ENCODE measurements at regions of chr14 and their contacts with region 1.

Region 1: GRCh38 chr14:92686900-92687444 is 61.5 kb downstream of the LGMN start:
- DNase-seq: peak; percentile 48 to 94 (median 82)

Region 2: DNA sequence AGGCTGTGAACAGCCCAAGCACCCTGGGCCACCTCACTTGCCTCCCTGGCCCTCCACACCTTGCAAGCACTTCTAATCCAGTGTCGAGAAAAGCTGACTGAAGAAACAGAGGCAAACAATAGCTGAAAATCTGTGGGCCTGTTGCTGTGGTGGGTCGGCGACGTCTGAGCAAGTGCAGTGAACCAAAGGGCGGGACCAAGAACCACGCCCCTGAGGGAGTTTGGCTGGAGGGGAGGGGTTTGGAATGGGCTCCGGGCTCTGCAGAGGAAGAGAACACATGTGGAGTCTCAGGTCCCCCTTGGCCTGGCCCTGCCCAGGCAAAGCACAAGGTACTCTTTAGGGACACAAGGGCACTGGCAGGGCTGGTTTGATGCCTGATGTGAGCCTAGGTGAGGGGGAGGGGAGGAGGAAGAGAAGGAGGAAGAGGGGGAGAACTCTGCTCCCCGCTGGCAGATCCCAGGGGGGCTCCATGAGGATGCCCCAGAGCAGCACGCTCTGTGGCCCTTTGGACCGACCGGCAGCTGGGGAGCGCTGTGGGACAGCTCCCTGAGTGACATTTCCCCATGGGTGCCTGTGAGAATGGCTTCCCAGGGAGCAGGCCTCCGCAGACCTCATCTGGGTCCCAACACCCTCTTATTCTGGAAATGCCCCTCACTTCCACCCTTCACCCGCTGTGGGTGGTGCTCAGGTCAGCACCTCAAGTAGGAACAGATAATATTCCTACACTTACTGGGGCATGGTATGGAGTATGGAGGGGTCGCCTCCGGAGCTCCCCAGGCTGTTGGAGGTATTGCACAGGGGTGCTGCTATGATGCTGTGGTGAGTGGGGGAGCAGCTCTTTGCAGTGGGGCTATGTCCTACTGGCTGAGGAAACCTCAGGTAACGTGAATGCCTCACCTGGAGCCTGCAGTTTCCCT is 479.7 kb before region 1 on chr14:
- intact Hi-C with region 1: no loop called
- DNase-seq: no peak

Region 3: DNA sequence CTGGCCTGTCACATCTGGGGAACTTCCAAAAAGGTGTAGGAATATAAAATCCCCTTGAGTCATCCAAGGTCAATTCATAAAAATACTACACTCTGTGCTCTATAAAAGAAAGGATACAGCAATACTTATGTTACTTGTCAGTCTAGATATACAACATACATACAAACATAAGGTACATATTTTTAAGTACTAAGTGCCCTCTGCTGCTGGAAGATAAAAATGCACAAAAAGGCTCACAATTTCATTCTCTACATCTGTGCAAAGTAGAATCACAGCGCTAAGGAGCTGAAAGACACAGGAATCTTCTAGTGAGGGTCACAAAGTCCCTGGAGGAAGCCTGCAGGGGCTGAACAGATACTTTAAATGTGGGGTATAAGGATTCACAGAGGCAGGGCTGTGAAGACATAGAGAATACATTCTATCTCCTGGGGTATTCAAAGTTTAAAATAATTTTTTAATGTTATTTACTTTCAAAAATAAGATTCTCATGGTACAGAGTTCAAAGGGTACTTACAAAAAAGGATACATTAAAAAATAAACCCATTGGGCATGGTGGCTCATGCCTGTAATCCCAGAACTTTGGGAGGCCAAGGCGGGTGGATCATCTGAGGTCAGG is 97.0 kb after region 1 on chr14:
- intact Hi-C with region 1: loop called (anchors 10 kb)
- DNase-seq: peak in 12 of 42 donors; percentile 19 to 67 (median 34)

Region 4: GRCh38 chr14:93150227-93151206 is 463.5 kb after region 1 on chr14:
- intact Hi-C with region 1: no loop called
- DNase-seq: peak in 6 of 42 donors; percentile 13 to 27 (median 16)

Measured in head of caudate nucleus (tissue), 42 donors.